ENCODE measurements at regions of chr12 and their contacts with region 1.

Region 1: GRCh38 chr12:76820888-76821482 is 57.1 kb downstream of the ZDHHC17 start:
- DNase-seq: peak; percentile 7
- ATAC-seq: peak; percentile 84
- H3K4me3 ChIP-seq: no peak overlapping the region
- H3K27ac ChIP-seq: no peak overlapping the region
- H3K4me1 ChIP-seq: no peaks in the 10 kb centered on the region
- H3K27me3 ChIP-seq: no peaks in the 10 kb centered on the region
- CTCF ChIP-seq: peak; percentile 41 to 84 (median 74); a peak in 5 of 6 replicates
- POLR2A ChIP-seq: no peak
- RAD21 ChIP-seq: peak; percentile 60

Region 2: DNA sequence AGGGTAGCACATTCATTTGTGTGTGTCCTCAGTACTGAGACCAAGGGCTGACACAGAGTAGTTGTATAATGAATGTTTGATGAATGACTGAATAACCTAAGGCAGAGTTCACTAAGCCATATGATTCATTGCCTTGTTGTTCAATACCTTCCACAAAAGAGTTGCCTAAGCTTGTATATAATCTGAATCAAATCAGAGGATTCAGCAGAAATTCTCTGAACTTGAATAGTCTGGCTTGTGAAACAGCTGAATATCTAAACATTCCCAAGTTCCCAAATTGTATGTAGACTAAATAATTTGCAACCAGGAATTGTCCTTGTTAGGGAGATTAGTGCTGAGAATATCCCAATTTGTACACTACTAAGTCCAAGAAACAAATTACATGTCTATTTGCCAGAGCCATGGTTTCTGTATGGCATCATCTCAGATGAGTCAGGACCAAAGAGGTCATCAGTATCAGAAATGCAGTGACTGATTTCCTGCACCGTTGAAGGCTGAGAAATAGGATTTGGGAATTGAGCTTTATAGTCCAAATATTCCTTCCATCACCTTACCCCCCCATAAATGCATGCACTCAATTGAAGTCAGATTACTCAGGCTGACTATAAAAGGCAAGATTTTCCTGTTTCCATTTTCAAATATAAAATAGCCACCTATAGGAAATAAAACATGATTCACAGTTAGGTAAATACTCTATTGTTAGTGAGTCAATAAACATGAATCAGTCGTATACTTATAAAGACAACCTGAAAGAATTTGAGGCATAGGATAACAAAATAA is 958.1 kb before region 1 on chr12:
- CTCF ChIA-PET with region 1: no interaction called
- POLR2A ChIA-PET with region 1: no interaction called
- RAD21 ChIA-PET with region 1: no interaction called
- intact Hi-C with region 1: no loop called
- DNase-seq: peak; percentile 84
- ATAC-seq: peak; percentile 80
- H3K4me3 ChIP-seq: no peak overlapping the region
- H3K27ac ChIP-seq: peak overlapping the region; percentile 87
- H3K4me1 ChIP-seq: peaks cover 46 to 91% of the 10 kb centered on the region in 2 experiments
- H3K27me3 ChIP-seq: no peaks in the 10 kb centered on the region
- CTCF ChIP-seq: no peak
- POLR2A ChIP-seq: no peak
- RAD21 ChIP-seq: 0 out of 2 replicates have a peak, but pooled peaks have one; percentile 20

Region 3: DNA sequence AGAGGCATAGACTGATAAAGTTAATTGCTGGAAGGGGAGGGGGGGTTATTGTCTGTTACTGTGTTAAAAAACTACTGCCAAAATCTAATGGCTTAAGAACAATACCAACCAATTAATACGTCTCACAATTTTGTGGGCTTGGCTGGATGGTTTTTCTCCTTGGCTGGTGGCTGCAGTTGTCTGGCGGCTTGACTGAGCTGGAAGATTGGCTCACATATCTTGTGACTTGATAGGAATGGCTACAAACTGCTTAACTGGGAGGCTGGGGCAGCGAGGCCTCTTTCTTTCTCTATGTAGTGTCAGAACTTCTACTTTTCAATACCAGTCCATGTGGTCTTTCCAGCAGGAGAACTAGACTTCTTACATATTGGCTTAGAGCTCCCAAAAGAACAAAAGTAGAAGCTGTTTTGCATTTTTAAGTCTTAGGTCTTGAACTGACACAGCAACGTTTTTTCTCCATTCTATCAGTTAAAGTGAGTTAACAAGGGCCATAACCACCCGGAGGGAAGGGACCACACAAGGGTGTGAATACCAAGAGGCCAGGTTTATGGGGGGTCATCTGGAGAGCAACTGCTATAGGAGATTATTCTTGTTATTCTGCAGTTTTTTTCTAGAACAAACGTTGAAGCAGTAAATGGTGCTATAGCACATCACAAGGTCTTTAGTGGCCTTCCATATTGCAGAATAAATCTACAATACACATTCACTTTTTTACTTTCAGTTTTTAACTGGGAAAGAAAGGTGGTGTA is 10.1 kb before region 1 on chr12:
- CTCF ChIA-PET with region 1: interaction called, 10 read pairs
- POLR2A ChIA-PET with region 1: no interaction called
- RAD21 ChIA-PET with region 1: no interaction called
- intact Hi-C with region 1: no loop called
- DNase-seq: no peak
- ATAC-seq: no peak
- H3K4me3 ChIP-seq: no peak overlapping the region
- H3K27ac ChIP-seq: no peak overlapping the region
- H3K4me1 ChIP-seq: no peaks in the 10 kb centered on the region
- H3K27me3 ChIP-seq: no peaks in the 10 kb centered on the region
- CTCF ChIP-seq: no peak
- POLR2A ChIP-seq: no peak
- RAD21 ChIP-seq: no peak